ENCODE measurements at regions of chr5 and their contacts with region 1.

Region 1: DNA sequence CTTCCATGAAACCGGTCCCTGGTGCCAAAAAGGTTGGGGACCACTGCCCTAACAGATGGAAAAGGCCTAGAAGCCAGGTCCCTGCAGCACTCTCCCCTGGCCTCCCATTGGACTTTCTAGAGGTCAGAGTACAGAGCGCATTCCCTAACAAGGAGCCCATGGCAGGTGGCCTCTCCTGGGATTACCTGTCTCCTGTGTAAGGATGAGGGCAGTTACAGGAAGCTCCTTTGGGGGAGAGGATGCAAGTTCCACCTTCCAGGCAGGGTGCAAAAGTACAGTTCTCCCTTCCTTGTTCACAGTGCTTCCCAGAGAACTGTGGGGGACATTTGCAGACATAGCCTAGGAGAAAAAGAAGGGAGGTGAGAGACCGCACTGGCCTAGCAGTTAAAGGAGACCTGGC is 62.4 kb downstream of the SLC36A1 start:
- DNase-seq: no peak
- ATAC-seq: no peak
- H3K4me3 ChIP-seq: no peak overlapping the region
- H3K27ac ChIP-seq: no peak overlapping the region
- H3K4me1 ChIP-seq: no peaks in the 10 kb centered on the region
- H3K27me3 ChIP-seq: no peaks in the 10 kb centered on the region

Region 2: GRCh38 chr5:151628112-151628823 is 118.4 kb after region 1 on chr5:
- intact Hi-C with region 1: no loop called
- DNase-seq: peak; percentile 57 to 81
- ATAC-seq: peak; percentile 46
- H3K4me3 ChIP-seq: no peak overlapping the region
- H3K27ac ChIP-seq: no peak overlapping the region
- H3K4me1 ChIP-seq: no peaks in the 10 kb centered on the region
- H3K27me3 ChIP-seq: no peaks in the 10 kb centered on the region

Region 3: DNA sequence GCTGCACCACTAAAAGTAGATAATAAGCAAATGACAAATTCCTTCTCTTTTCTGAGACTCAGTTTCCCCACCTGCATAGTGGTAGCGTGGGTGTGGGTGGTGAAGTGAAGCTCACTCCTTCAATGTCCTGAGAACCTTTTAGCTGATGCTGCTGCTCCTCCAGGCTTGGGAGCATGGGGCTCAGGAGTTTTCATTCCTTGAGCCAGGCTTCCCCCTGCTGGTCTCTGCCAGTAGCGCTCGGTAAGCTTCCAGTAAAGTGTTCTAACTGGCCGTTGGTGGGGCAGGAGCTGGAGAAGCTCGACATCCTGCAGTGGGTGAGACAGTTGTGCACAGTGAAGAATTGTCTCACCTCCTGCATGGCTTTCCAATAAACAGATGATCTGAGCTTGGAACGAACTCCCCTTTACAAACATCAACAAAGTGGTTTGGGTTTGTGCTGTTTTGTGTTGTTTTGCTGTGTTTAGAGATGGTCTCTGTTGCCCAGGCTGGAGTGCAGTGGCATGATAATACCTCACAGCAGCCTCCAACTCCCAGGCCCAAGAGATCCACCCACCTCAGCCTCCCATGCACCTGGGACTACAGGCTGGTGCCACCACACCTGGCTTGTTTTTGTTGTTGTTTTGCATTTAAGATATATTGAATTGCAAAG is 142.3 kb after region 1 on chr5:
- intact Hi-C with region 1: loop called in 1 of 2 experiments (anchors 10 kb)
- DNase-seq: peak; percentile 82 to 91
- ATAC-seq: peak; percentile 91
- H3K4me3 ChIP-seq: no peak overlapping the region
- H3K27ac ChIP-seq: no peak overlapping the region
- H3K4me1 ChIP-seq: no peaks in the 10 kb centered on the region
- H3K27me3 ChIP-seq: no peaks in the 10 kb centered on the region

Measured in aorta (tissue), 5 donors.